A549 (cell line): ENCODE measurements at regions of chr1 and their contacts with region 1.

Region 1: GRCh38 chr1:3125546-3126368 is 56.8 kb downstream of the PRDM16 start:
- DNase-seq: no peak
- ATAC-seq: no peak
- H3K4me3 ChIP-seq: no peak overlapping the region
- H3K27ac ChIP-seq: no peak overlapping the region
- H3K4me1 ChIP-seq: no peaks in the 10 kb centered on the region
- CTCF ChIP-seq: no peak
- EP300 ChIP-seq: no peak
- POLR2A ChIP-seq: no peak
- RAD21 ChIP-seq: no peak

Region 2: GRCh38 chr1:3109355-3109754 is 16.4 kb before region 1 on chr1:
- CTCF ChIA-PET with region 1: interaction called, 10 read pairs
- POLR2A ChIA-PET with region 1: no interaction called
- DNase-seq: no peak
- ATAC-seq: no peak
- H3K4me3 ChIP-seq: no peak overlapping the region
- H3K27ac ChIP-seq: no peak overlapping the region
- H3K4me1 ChIP-seq: no peaks in the 10 kb centered on the region
- CTCF ChIP-seq: no peak
- EP300 ChIP-seq: no peak
- POLR2A ChIP-seq: no peak
- RAD21 ChIP-seq: no peak

Region 3: GRCh38 chr1:3170561-3171453 is 45.0 kb after region 1 on chr1:
- CTCF ChIA-PET with region 1: no interaction called
- POLR2A ChIA-PET with region 1: no interaction called
- DNase-seq: no peak
- ATAC-seq: no peak
- H3K4me3 ChIP-seq: no peak overlapping the region
- H3K27ac ChIP-seq: no peak overlapping the region
- H3K4me1 ChIP-seq: no peaks in the 10 kb centered on the region
- CTCF ChIP-seq: no peak
- EP300 ChIP-seq: no peak
- POLR2A ChIP-seq: no peak
- RAD21 ChIP-seq: no peak